Adrenal gland (tissue), 19 donors: ENCODE measurements at regions of chr5 and their contacts with region 1.

Region 1: DNA sequence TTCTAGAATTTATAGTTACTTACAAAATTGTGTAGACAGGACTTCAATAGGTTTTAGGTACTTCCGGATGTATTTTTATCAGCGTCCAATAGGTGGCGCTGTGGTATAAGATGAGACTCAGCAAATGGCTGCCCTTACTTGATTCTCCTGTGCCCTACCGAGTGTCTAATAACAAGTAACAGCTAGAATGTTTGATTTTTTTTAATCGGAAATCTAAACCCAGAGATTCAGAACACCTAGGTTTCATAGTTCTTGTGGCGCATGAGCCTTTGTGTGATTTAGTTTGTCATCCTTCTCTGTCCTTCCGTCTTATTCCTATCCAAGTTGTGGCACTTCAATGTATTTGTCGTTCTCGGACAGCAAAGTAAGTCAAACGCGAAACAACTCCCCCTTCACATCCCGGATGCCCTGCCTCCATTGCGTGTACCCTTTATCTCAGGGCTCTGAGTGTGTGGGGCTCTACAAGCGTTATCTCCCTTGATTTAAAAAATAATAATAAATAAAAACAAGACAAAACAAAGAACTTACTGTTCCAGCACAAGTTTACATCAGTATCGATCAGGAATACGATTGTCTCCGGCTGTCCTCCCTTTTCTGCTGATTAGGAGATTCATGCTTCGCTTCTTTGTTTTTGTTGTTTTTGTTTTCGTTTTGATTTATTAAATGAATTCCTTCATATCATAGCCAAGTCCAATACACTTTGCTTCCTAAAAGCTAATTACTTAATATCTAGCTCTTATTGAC is 50.7 kb upstream of the SLC30A5 start:
- DNase-seq: peak; percentile 76 to 92 (median 83)
- H3K4me3 ChIP-seq: peak overlapping the region in 3 of 4 donors; percentile 16 to 60 (median 27)
- H3K27ac ChIP-seq: peak overlapping the region; percentile 74 to 89 (median 79)
- H3K4me1 ChIP-seq: peaks cover 0 to 5% of the 10 kb centered on the region in 2 donors
- H3K27me3 ChIP-seq: no peaks in the 10 kb centered on the region
- CTCF ChIP-seq: peak; percentile 85 to 93 (median 90)
- POLR2A ChIP-seq: peak in 1 of 2 donors; percentile 56

Region 2: GRCh38 chr5:68353605-68354004 is 689.5 kb before region 1 on chr5:
- intact Hi-C with region 1: no loop called
- DNase-seq: no peak
- H3K4me3 ChIP-seq: no peak overlapping the region
- H3K27ac ChIP-seq: no peak overlapping the region
- H3K4me1 ChIP-seq: no peaks in the 10 kb centered on the region
- H3K27me3 ChIP-seq: no peaks in the 10 kb centered on the region
- CTCF ChIP-seq: no peak
- POLR2A ChIP-seq: no peak

Region 3: GRCh38 chr5:68991279-68992084 is 51.6 kb before region 1 on chr5:
- intact Hi-C with region 1: no loop called
- DNase-seq: no peak
- H3K4me3 ChIP-seq: no peak overlapping the region
- H3K27ac ChIP-seq: no peak overlapping the region
- H3K4me1 ChIP-seq: no peaks in the 10 kb centered on the region
- H3K27me3 ChIP-seq: no peaks in the 10 kb centered on the region
- CTCF ChIP-seq: no peak
- POLR2A ChIP-seq: no peak

Region 4: DNA sequence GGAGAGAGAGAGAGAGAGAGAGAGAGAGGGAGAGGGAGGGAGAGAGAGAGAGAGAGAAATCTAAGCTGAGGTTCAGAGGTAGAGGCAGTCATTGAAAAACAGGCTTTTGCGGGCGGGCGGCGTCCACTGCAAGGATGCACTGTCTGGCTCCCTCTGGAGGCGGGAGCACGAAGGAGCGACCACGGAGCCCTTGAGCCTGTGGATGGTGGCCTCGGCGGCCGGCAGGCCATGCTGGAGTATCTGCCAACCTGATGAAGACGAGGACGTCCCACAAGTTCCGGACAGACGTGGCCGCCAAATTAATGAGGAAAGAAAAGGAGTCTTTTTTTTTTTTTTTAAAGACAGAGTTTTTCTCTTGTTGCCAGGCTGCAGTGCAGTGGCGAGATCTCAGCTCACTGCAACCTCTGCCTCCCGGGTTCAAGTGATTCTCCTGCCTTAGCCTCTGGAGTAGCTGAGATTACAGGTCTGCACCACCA is 291.7 kb after region 1 on chr5:
- intact Hi-C with region 1: loop called in 1 of 2 experiments (anchors 10 kb)
- DNase-seq: peak; percentile 83 to 96 (median 90)
- H3K4me3 ChIP-seq: no peak overlapping the region
- H3K27ac ChIP-seq: no peak overlapping the region
- H3K4me1 ChIP-seq: peaks cover 0 to 13% of the 10 kb centered on the region in 2 donors
- H3K27me3 ChIP-seq: no peaks in the 10 kb centered on the region
- CTCF ChIP-seq: peak; percentile 65 to 82 (median 76)
- POLR2A ChIP-seq: no peak